Endothelial cell of umbilical vein (primary cell): ENCODE measurements at regions of chr17 and their contacts with region 1.

Region 1: GRCh38 chr17:81101614-81102306 is 63.5 kb upstream of the PVALEF start:
- DNase-seq: peak; percentile 79
- H3K4me3 ChIP-seq: no peak overlapping the region
- H3K27ac ChIP-seq: no peak overlapping the region
- H3K4me1 ChIP-seq: peaks cover 2% of the 10 kb centered on the region
- H3K27me3 ChIP-seq: no peaks in the 10 kb centered on the region
- CTCF ChIP-seq: peak; percentile 100
- POLR2A ChIP-seq: no peak

Region 2: DNA sequence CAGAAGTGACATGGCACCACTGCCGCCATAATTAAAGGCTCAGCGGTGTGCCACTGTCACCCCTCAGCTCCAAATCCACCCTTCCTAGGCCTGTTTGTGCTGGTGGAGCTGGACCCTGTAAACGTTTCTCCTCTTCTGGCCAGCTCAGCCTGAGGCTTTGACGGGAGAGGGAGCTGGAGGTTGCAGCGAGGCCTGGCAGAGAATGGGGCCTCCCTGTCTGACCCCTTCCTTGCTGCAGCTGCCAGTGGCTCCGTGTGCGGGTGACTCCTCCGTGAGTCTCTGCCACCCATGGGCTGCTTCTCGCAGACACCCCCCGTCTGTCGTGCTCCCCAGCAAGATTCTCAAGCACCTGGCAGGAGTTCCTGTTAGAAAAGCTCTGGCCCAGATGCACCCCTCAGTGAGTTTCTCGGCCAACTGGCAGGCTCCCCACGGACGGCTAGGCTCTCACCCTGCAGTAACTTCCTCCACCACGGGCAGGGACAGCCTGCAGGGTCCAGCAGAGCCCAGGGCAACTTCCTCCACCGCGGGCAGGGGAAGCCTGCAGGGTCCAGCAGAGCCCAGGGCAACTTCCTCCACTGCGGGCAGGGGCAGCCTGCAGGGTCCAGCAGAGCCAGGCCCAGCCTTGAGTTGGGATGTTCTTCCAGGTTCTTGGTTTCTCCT is 114.8 kb before region 1 on chr17:
- CTCF ChIA-PET with region 1: interaction called, 62 read pairs
- POLR2A ChIA-PET with region 1: no interaction called
- dilution Hi-C with region 1: no loop called
- intact Hi-C with region 1: loop called (anchors 1 kb)
- DNase-seq: no peak
- H3K4me3 ChIP-seq: no peak overlapping the region
- H3K27ac ChIP-seq: no peak overlapping the region
- H3K4me1 ChIP-seq: no peaks in the 10 kb centered on the region
- H3K27me3 ChIP-seq: no peaks in the 10 kb centered on the region
- CTCF ChIP-seq: no peak
- POLR2A ChIP-seq: no peak

Region 3: DNA sequence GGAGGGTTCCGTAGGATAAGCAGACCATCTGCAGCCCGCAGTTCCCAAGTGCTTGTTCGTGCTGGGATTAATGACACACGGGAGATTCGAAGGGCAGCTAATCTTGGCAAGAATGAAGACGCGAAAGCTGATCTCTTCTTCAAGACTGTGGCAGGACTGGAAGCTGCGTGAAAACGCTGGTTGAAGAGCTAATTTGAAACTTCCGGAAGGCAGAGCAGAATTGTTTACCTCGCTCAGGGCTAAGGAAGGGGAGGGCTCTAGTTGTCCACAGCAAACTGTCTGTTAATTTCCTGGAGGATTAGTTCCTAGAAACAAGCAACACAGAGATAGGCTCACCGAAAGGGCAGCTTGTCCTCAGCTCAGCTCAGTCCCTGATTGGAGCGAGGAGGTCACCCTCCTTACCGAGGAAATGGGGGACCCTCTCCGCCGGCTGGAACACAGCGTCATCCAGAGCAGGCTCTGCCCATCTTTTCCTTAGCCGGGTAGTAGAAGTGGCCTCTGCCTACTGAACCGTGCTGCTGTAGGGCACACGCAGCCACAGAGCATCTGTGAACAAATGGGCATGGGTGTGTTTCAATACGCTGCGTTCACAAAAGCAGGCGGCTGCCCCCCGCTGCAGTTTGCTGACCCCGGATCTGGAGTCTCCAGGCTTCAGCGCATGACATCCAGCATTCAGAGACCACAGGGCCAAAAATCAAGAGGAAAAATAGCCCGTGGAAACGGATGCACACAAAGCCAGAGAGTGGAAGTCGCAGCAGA is 83.5 kb before region 1 on chr17:
- CTCF ChIA-PET with region 1: interaction called, 62 read pairs
- POLR2A ChIA-PET with region 1: no interaction called
- dilution Hi-C with region 1: no loop called
- intact Hi-C with region 1: loop called (anchors 1 kb)
- DNase-seq: peak; percentile 65
- H3K4me3 ChIP-seq: peak overlapping the region in 2 of 3 experiments; percentile 28 to 51
- H3K27ac ChIP-seq: peak overlapping the region; percentile 29
- H3K4me1 ChIP-seq: peaks cover 12% of the 10 kb centered on the region
- H3K27me3 ChIP-seq: no peaks in the 10 kb centered on the region
- CTCF ChIP-seq: no peak
- POLR2A ChIP-seq: peak; percentile 50

Region 4: GRCh38 chr17:81025741-81026129 is 76.0 kb before region 1 on chr17:
- CTCF ChIA-PET with region 1: interaction called, 62 read pairs
- POLR2A ChIA-PET with region 1: no interaction called
- dilution Hi-C with region 1: no loop called
- intact Hi-C with region 1: loop called (anchors 1 kb)
- DNase-seq: no peak
- H3K4me3 ChIP-seq: no peak overlapping the region
- H3K27ac ChIP-seq: no peak overlapping the region
- H3K4me1 ChIP-seq: peaks cover 3% of the 10 kb centered on the region
- H3K27me3 ChIP-seq: peaks cover 0 to 2% of the 10 kb centered on the region in 2 experiments
- CTCF ChIP-seq: no peak
- POLR2A ChIP-seq: no peak

Region 5: GRCh38 chr17:81238817-81239600 is 137.2 kb after region 1 on chr17 and contains the starts of genes NDUFAF8 and TEPSIN:
- CTCF ChIA-PET with region 1: no interaction called
- POLR2A ChIA-PET with region 1: no interaction called
- dilution Hi-C with region 1: no loop called
- intact Hi-C with region 1: loop called (anchors 1 kb)
- DNase-seq: peak; percentile 100
- H3K4me3 ChIP-seq: peak within 1 kb of the TSS; percentile 78 to 86 (median 84)
- H3K27ac ChIP-seq: peak within 1 kb of the TSS; percentile 58
- H3K4me1 ChIP-seq: peaks cover 6% of the 10 kb centered on the region
- H3K27me3 ChIP-seq: no peaks in the 10 kb centered on the region
- CTCF ChIP-seq: no peak
- POLR2A ChIP-seq: peak; percentile 56
- total RNA-seq, gene NDUFAF8: 61.5 and 69.9 TPM in 2 replicates
- total RNA-seq, gene TEPSIN: 35.6 and 41.6 TPM in 2 replicates